IMR-90 (cell line): ENCODE measurements at regions of chr12 and their contacts with region 1.

Region 1: GRCh38 chr12:751192-751998 is 984 bp upstream of the WNK1 start:
- DNase-seq: peak; percentile 96
- ATAC-seq: peak; percentile 59
- H3K4me3 ChIP-seq: peak overlapping the region; percentile 44
- H3K27ac ChIP-seq: peak overlapping the region; percentile 57
- H3K4me1 ChIP-seq: no peaks in the 10 kb centered on the region; the same call in 1 of the 2 replicates
- H3K27me3 ChIP-seq: no peaks in the 10 kb centered on the region
- CTCF ChIP-seq: peak; percentile 86
- POLR2A ChIP-seq: no peak
- RAD21 ChIP-seq: peak; percentile 81

Region 2: GRCh38 chr12:569803-570434 is 181.5 kb before region 1 on chr12:
- CTCF ChIA-PET with region 1: interaction called, 19 read pairs
- POLR2A ChIA-PET with region 1: interaction called, 4 read pairs
- dilution Hi-C with region 1: no loop called
- in situ Hi-C with region 1: loop called (anchors 5 kb)
- intact Hi-C with region 1: loop called (anchors 1 kb)
- DNase-seq: peak; percentile 70
- ATAC-seq: peak; percentile 81
- H3K4me3 ChIP-seq: peak overlapping the region; percentile 65
- H3K27ac ChIP-seq: peak overlapping the region; percentile 60
- H3K4me1 ChIP-seq: peaks cover 14% of the 10 kb centered on the region
- H3K27me3 ChIP-seq: peaks cover 15% of the 10 kb centered on the region
- CTCF ChIP-seq: peak; percentile 94
- POLR2A ChIP-seq: no peak; the same call in 1 of the 2 replicates
- RAD21 ChIP-seq: peak; percentile 92

Region 3: DNA sequence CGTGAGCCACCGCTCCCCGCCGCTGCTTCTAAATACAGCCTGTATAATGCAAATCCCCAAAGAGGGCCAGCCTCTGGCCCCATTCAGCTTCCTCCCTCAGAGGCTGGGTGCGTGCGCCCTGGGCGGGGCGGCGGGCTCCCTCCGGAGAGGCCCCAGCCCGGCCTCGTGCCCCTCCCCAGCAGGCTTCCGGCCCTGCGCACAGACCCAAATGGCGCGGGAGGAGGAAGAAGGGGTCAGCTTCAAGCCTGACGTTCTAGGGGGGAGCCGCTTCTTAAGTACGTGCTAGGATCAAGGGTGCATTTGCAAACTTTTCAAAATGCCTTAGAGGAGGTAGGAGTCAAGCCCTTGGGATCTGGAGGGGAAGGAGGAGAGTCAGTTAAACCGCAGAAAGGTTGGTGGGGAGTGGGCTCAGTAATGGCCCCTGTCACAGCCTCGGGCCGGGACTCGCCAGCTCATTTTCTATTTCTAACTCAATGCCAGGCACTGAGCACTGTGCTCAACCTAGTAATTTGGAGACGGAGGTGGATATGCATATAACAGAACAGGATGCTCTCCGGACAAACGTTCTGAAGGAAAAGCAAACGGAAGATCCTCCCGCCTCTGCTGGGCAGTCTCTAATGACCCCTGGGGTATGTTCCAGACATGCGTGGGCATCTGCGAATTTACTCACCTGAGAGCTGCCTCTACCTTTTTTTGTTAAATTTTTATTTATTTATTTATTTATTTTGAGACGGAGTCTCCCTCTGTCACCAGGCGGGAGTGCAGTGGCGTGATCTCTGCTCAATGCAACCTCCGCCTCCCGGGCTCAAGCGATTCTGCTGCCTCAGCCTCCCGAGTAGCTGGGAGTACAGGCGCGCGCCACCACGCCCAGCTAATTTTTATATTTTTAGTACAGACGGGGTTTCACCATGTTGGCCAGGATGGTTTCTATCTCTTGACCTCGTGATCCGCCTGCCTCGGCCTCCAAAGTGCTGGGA is 120.5 kb before region 1 on chr12:
- CTCF ChIA-PET with region 1: interaction called, 3 read pairs
- POLR2A ChIA-PET with region 1: no interaction called
- dilution Hi-C with region 1: no loop called
- in situ Hi-C with region 1: no loop called
- intact Hi-C with region 1: loop called (anchors 5 kb)
- DNase-seq: no peak
- ATAC-seq: no peak
- H3K4me3 ChIP-seq: no peak overlapping the region
- H3K27ac ChIP-seq: no peak overlapping the region
- H3K4me1 ChIP-seq: peaks cover 7% of the 10 kb centered on the region
- H3K27me3 ChIP-seq: no peaks in the 10 kb centered on the region; the same call in 1 of the 2 replicates
- CTCF ChIP-seq: no peak
- POLR2A ChIP-seq: no peak
- RAD21 ChIP-seq: no peak

Region 4: GRCh38 chr12:772056-772697 is 20.8 kb after region 1 on chr12:
- CTCF ChIA-PET with region 1: interaction called, 3 read pairs
- POLR2A ChIA-PET with region 1: no interaction called
- dilution Hi-C with region 1: no loop called
- in situ Hi-C with region 1: no loop called
- intact Hi-C with region 1: loop called (anchors 2 kb)
- DNase-seq: no peak
- ATAC-seq: no peak
- H3K4me3 ChIP-seq: no peak overlapping the region
- H3K27ac ChIP-seq: no peak overlapping the region
- H3K4me1 ChIP-seq: peaks cover 4% of the 10 kb centered on the region
- H3K27me3 ChIP-seq: no peaks in the 10 kb centered on the region
- CTCF ChIP-seq: no peak
- POLR2A ChIP-seq: no peak
- RAD21 ChIP-seq: no peak

Region 5: GRCh38 chr12:810671-811415 is 59.4 kb after region 1 on chr12:
- CTCF ChIA-PET with region 1: interaction called, 5 read pairs
- POLR2A ChIA-PET with region 1: no interaction called
- dilution Hi-C with region 1: no loop called
- in situ Hi-C with region 1: no loop called
- intact Hi-C with region 1: loop called (anchors 5 kb)
- DNase-seq: peak; percentile 23
- ATAC-seq: no peak
- H3K4me3 ChIP-seq: no peak overlapping the region
- H3K27ac ChIP-seq: no peak overlapping the region
- H3K4me1 ChIP-seq: peaks cover 5% of the 10 kb centered on the region
- H3K27me3 ChIP-seq: no peaks in the 10 kb centered on the region
- CTCF ChIP-seq: no peak
- POLR2A ChIP-seq: no peak
- RAD21 ChIP-seq: no peak

Region 6: DNA sequence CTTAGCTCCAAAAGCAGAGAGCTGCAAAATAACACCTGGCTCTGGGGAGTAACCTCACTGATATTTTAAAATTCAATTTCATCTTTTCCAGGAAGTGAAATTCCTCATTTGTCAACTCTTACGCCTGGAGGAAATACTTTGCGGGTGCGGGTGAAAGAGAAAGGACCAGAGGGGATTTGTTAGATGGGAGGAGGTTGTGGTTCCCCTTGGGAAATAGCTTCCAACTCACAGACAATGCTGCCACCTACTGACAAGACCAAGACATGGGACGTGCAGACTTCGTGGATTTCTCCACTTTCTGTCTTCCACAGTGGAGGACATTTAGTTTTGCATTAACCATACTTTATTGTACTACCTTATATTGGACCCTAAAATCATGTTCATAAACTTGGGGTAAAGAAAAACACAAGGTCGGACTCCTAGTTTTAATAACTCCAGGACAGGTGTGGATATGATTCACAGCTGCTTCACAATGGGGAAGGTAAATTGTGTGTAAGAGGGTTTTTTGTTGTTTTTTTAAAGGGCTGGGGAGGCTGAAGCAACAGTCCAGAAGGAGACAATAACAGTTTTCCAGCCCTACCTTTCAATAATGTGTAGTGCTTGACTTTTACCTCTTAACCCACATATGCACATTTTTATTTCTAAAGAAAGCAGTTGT is 832.2 kb after region 1 on chr12:
- CTCF ChIA-PET with region 1: no interaction called
- POLR2A ChIA-PET with region 1: no interaction called
- dilution Hi-C with region 1: no loop called
- in situ Hi-C with region 1: no loop called
- intact Hi-C with region 1: loop called (anchors 5 kb)
- DNase-seq: peak; percentile 93
- ATAC-seq: peak; percentile 63
- H3K4me3 ChIP-seq: no peak overlapping the region
- H3K27ac ChIP-seq: no peak overlapping the region
- H3K4me1 ChIP-seq: peaks cover 16% of the 10 kb centered on the region
- H3K27me3 ChIP-seq: no peaks in the 10 kb centered on the region
- CTCF ChIP-seq: peak; percentile 95
- POLR2A ChIP-seq: peak; percentile 27; the same call in 1 of the 2 replicates
- RAD21 ChIP-seq: peak; percentile 97